Activated CD4-positive, alpha-beta memory T cell treated with anti-CD3 and anti-CD28 coated beads, Interleukin-2, amount 10 ng/mL, durations not matched to agents 7 days and 5 days (primary cell): ENCODE measurements at regions of chr10 and their contacts with region 1.

Region 1: DNA sequence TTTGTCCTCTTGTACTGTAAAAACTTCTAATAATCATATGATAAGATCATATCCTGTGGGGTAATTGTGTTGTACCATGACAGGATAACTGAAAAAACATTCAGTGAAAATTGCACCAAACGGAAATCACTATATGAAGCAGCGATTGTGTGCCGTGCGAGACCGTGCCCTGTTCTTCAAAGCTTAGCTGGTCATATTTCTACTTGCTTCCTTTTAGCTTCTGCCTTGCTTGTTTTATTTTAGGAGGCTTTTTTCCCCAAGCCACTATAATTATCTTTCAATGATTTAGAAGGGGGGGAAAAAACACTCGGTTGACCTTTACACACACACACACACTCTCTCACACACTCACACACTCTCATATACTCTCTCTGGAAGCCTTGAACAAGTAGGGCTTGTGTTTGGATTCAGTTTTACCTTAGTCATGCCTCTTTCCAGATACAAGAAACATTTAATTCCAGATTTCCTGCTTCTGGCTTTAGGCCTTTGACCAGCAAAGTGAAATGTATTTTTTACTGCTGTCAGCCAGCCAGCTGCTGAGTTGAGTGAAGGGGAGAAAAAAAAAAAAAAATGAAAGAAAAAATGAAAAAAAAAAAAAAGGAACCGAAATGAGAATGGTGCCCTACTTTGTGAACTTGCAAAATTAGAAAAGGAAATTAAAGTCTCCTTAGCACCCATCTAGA is 181.4 kb downstream of the ARID5B start:
- DNase-seq: peak; percentile 69
- H3K4me3 Mint-ChIP-seq: peak overlapping the region; percentile 61
- H3K27ac Mint-ChIP-seq: peak overlapping the region; percentile 92
- H3K4me1 Mint-ChIP-seq: peaks cover 81% of the 10 kb centered on the region
- H3K27me3 Mint-ChIP-seq: no peaks in the 10 kb centered on the region

Region 2: DNA sequence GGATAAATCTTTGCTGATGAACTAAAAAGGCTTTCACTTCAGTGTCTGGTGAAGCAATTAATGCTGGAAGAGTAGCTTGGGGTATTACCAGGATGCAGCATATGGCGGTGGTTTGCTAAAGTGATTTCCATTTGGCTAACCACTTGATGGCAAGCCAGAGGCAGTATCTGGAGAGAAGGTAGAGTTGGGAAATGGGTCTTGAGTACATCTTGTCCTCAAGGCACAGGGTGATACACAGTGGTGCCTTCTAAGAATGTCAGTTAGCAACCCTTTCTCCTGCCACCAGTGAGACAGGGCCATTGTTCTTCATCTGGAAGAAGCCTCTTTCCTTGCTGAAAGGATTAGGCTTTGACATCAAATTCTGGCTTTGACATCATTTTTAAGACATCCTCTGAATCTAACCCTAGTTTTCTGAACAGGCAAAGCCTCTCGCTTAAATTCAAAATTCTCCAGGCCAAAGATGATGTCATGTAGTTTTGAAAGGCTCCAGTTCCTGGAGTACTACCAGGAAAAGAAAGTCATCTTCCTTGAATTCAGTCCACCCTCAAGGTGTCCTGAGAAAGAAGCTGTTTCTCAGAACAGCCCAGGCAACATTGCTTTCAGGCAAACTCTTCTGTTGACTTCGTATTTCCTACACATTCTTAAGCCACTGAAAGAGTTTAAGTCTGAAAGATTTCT is 18.9 kb before region 1 on chr10:
- CTCF ChIA-PET with region 1: interaction called, 3 read pairs
- POLR2A ChIA-PET with region 1: interaction called, 16 read pairs
- DNase-seq: no peak
- H3K4me3 Mint-ChIP-seq: peak overlapping the region; percentile 36
- H3K27ac Mint-ChIP-seq: peak overlapping the region; percentile 89
- H3K4me1 Mint-ChIP-seq: peaks cover 88% of the 10 kb centered on the region
- H3K27me3 Mint-ChIP-seq: no peaks in the 10 kb centered on the region

Region 3: GRCh38 chr10:62071846-62072281 is 11.0 kb before region 1 on chr10:
- CTCF ChIA-PET with region 1: no interaction called
- POLR2A ChIA-PET with region 1: interaction called, 11 read pairs
- DNase-seq: no peak
- H3K4me3 Mint-ChIP-seq: no peak overlapping the region
- H3K27ac Mint-ChIP-seq: peak overlapping the region; percentile 13
- H3K4me1 Mint-ChIP-seq: peaks cover 79% of the 10 kb centered on the region
- H3K27me3 Mint-ChIP-seq: no peaks in the 10 kb centered on the region

Region 4: DNA sequence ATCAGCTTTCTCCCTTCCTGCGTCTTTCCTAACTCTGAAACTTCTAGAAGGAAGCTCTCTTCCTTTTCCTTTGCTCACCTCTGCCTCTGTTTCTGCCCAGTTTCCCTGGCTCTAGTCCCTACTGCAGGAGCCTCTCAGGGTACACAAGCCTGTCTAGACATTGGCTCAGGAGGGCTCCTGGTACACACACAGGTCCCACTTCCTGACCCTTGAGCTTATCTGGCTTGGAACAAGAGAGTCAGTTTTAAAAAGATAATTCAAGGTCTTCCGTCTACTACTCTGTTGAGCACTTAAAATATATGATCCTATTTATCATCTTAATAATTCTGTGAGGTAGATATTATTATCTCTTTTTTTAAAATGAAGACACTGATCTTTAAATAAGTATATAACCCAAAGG is 45.1 kb after region 1 on chr10:
- CTCF ChIA-PET with region 1: no interaction called
- POLR2A ChIA-PET with region 1: no interaction called
- DNase-seq: no peak
- H3K4me3 Mint-ChIP-seq: no peak overlapping the region
- H3K27ac Mint-ChIP-seq: no peak overlapping the region
- H3K4me1 Mint-ChIP-seq: peaks cover 11% of the 10 kb centered on the region
- H3K27me3 Mint-ChIP-seq: no peaks in the 10 kb centered on the region